Adrenal gland (tissue), 19 donors: ENCODE measurements at regions of chr19 and their contacts with region 1.

Region 1: DNA sequence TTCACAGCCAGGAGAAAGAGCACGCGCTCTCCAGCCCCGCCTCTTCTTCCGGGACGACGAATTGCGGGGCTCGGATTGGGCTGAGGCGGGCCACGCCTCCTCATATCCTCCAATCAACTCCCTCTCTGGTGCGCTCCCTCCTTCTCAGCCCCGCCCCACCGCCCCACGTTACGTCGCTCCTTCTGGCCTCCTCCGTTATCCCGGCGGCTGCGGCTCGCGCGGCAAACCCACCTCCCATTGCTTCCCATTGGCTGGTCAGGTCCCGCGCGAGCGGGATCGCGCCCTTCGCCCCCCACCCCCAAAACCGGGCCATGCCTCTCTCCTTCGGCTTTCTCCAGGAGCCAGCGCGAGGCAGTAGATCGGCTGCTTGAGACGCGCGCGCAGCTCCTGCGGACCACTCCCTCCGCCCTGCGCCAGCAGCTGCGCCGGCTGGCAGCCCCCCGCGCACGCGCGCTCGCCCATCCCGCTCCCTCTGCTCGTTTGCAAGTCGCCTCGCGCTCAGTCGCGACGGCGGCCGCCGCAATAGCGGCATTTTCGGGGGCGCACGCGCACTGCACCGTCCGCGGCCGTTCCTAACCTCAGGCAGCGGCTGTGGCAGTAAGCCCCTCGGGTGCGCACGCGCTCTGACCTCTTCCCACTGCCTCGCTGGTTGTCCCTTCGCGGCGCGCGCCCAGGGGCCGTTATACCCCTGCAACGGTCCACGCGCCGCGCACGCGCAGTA is 512 bp upstream of the ARHGAP35 start:
- DNase-seq: peak; percentile 98 to 99 (median 99)
- H3K4me3 ChIP-seq: peak overlapping the region; percentile 42 to 99 (median 52)
- H3K27ac ChIP-seq: peak overlapping the region; percentile 91 to 100 (median 99)
- H3K4me1 ChIP-seq: peaks cover 39 to 52% of the 10 kb centered on the region in 2 donors
- H3K27me3 ChIP-seq: no peaks in the 10 kb centered on the region
- CTCF ChIP-seq: peak in 1 of 6 experiments; percentile 9
- POLR2A ChIP-seq: peak; percentile 77 to 92

Region 2: GRCh38 chr19:46898731-46899130 is 38.4 kb after region 1 on chr19:
- intact Hi-C with region 1: loop called in 1 of 2 experiments (anchors 5 kb)
- DNase-seq: peak in 1 of 7 donors; percentile 46
- H3K4me3 ChIP-seq: no peak overlapping the region
- H3K27ac ChIP-seq: no peak overlapping the region
- H3K4me1 ChIP-seq: peaks cover 21 to 33% of the 10 kb centered on the region in 2 donors
- H3K27me3 ChIP-seq: no peaks in the 10 kb centered on the region
- CTCF ChIP-seq: no peak
- POLR2A ChIP-seq: no peak

Region 3: DNA sequence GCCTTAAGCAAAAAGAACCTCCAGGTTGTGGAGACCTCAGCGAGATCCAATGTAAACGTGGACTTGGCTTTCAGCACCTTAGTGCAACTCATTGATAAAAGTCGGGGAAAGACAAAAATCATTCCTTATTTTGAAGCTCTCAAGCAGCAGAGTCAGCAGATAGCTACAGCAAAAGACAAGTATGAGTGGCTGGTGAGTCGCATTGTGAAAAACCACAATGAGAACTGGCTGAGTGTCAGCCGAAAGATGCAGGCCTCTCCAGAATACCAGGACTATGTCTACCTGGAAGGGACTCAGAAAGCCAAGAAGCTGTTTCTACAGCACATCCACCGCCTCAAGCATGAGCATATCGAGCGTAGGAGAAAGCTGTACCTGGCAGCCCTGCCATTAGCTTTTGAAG is 59.0 kb after region 1 on chr19:
- intact Hi-C with region 1: no loop called
- DNase-seq: no peak
- H3K4me3 ChIP-seq: no peak overlapping the region
- H3K27ac ChIP-seq: no peak overlapping the region
- H3K4me1 ChIP-seq: peaks cover 5 to 40% of the 10 kb centered on the region in 2 donors
- H3K27me3 ChIP-seq: no peaks in the 10 kb centered on the region
- CTCF ChIP-seq: no peak
- POLR2A ChIP-seq: no peak

Region 4: GRCh38 chr19:46944918-46945628 is 84.8 kb after region 1 on chr19:
- intact Hi-C with region 1: no loop called
- DNase-seq: peak; percentile 63 to 90 (median 81)
- H3K4me3 ChIP-seq: no peak overlapping the region
- H3K27ac ChIP-seq: peak overlapping the region in 4 of 5 donors; percentile 7 to 80 (median 57)
- H3K4me1 ChIP-seq: peaks cover 16 to 30% of the 10 kb centered on the region in 2 donors
- H3K27me3 ChIP-seq: no peaks in the 10 kb centered on the region
- CTCF ChIP-seq: no peak
- POLR2A ChIP-seq: peak in 1 of 2 donors; percentile 28

Region 5: GRCh38 chr19:47644762-47645482 is 784.6 kb after region 1 on chr19:
- intact Hi-C with region 1: no loop called
- DNase-seq: peak in 1 of 7 donors; percentile 24
- H3K4me3 ChIP-seq: no peak overlapping the region
- H3K27ac ChIP-seq: peak overlapping the region in 1 of 5 donors; percentile 35
- H3K4me1 ChIP-seq: peaks cover 0 to 14% of the 10 kb centered on the region in 2 donors
- H3K27me3 ChIP-seq: no peaks in the 10 kb centered on the region
- CTCF ChIP-seq: no peak
- POLR2A ChIP-seq: no peak